ENCODE measurements at regions of chr18 and their contacts with region 1.

Region 1: DNA sequence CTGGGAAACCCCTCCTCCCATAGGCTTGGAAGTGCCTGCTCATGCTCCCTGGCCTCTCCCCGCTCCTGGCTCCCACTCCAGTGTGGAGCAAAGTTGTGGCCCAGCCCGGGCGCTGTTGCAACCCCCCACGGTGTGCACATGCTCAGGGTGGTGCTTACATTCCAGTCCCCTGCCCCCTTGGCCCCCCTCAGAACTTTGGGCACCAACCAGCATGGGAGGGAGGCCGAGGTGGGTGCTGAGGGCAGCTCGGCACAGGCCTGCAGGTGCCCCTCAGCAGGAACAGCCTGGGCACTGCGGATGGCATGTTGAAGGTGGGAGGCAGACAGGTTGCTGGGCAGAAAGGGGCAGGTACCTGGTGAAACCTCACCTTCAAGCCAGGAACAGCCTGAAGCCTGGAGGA is 125.3 kb downstream of the ARHGAP28 start:
- DNase-seq: no peak
- ATAC-seq: no peak
- H3K4me3 ChIP-seq: no peak overlapping the region
- H3K27ac ChIP-seq: no peak overlapping the region
- H3K4me1 ChIP-seq: no peaks in the 10 kb centered on the region
- H3K27me3 ChIP-seq: no peaks in the 10 kb centered on the region
- CTCF ChIP-seq: no peak
- POLR2A ChIP-seq: no peak

Region 2: DNA sequence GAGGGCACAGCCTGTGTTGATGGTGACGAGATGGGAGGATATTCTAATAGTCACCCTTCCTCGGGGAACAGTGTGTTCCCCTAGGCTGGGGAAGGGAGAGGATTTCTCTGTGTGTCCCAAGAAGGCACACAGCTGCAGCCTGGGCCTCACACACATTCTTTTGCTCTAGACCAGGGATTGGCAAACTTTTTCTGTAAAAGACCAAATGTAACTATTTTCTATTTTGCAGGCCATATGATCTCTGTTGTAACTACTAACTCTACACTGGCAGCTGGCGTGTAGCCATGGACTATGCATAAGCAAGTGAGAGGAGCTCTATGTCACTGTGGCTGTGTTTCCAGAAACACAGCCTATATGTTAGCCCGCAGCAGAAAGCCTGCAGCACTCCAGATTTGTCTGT is 59.5 kb before region 1 on chr18:
- intact Hi-C with region 1: loop called in 1 of 10 experiments (anchors 5 kb)
- DNase-seq: no peak
- ATAC-seq: no peak
- H3K4me3 ChIP-seq: no peak overlapping the region
- H3K27ac ChIP-seq: no peak overlapping the region
- H3K4me1 ChIP-seq: no peaks in the 10 kb centered on the region
- H3K27me3 ChIP-seq: no peaks in the 10 kb centered on the region
- CTCF ChIP-seq: no peak
- POLR2A ChIP-seq: no peak

Region 3: GRCh38 chr18:6901283-6901926 is 46.6 kb after region 1 on chr18:
- intact Hi-C with region 1: no loop called
- DNase-seq: no peak
- ATAC-seq: no peak
- H3K4me3 ChIP-seq: no peak overlapping the region
- H3K27ac ChIP-seq: no peak overlapping the region
- H3K4me1 ChIP-seq: no peaks in the 10 kb centered on the region
- H3K27me3 ChIP-seq: no peaks in the 10 kb centered on the region
- CTCF ChIP-seq: no peak
- POLR2A ChIP-seq: no peak

Measured in heart left ventricle (tissue), 16 donors.